PC-3 (cell line): ENCODE measurements at regions of chr7 and their contacts with region 1.

Region 1: GRCh38 chr7:148884299-148885022 is 370 bp upstream of the EZH2 start:
- DNase-seq: peak; percentile 92
- ATAC-seq: peak; percentile 91
- H3K4me3 ChIP-seq: peak overlapping the region; percentile 80
- H3K27ac ChIP-seq: peak overlapping the region; percentile 81
- H3K4me1 ChIP-seq: peaks cover 20% of the 10 kb centered on the region
- H3K27me3 ChIP-seq: no peaks in the 10 kb centered on the region
- CTCF ChIP-seq: no peak

Region 2: DNA sequence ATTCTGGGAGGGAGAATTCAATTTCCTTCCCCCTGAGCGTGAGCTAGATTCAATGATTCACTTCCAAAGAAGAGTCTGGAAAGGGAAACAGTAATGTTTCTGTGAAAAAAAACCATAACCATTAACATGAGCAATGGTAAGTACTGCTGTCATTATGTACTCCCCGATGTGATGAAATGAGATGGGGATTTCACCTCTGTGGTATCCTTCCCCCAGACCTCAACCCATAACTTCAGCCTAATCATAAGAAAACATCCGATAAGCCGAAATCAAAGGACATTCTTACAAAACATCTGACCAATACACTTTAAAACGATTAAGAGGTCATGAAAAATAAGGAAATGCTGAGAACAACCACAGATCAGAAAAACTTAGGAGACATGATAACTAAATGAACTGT is 27.6 kb before region 1 on chr7:
- CTCF ChIA-PET with region 1: no interaction called
- POLR2A ChIA-PET with region 1: no interaction called
- intact Hi-C with region 1: loop called (anchors 2 kb)
- DNase-seq: no peak
- ATAC-seq: peak; percentile 15
- H3K4me3 ChIP-seq: no peak overlapping the region
- H3K27ac ChIP-seq: no peak overlapping the region
- H3K4me1 ChIP-seq: no peaks in the 10 kb centered on the region
- H3K27me3 ChIP-seq: no peaks in the 10 kb centered on the region
- CTCF ChIP-seq: no peak

Region 3: DNA sequence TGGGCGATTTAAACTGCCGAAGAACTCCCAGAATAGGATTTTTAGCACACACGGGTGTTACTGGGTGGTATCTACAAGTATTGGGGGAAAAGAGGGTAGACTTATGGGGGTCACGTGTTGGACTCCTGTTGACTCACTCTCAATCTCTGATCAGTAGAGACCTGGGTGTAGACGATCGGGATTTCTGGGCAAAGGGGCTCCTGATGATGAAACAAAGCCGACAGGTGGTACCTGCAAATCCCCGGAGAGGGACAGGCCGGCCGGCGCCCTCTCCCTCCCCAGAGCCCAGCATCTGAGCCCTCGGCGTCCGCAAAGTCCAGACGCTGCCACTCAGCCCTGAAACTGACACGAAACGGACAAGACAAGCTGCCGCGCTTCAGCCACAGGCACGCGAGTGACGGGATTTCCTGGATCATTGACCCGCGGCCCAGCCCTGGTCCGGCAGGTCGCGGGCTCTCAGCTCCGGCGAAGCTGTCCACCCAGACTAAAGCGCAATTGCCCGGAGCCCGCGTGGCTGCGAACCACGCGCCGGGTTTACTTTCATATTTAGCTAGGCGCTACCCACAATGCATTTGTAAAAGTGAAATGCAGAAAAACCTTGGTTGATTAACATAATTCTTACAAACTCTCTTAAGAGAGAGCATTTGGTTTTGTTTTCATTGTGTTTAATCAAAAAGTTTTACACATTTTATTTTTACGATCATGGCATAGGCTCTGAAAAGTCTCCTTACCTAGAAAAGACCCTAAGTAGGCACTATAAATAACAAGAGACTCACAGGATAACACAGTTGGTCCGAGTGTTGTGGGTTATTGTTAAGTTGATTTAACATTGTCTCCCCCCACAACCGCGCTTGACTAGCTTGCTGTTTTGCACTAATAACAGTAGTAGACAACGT is 56.5 kb after region 1 on chr7:
- CTCF ChIA-PET with region 1: interaction called, 14 read pairs
- POLR2A ChIA-PET with region 1: interaction called, 4 read pairs
- intact Hi-C with region 1: loop called (anchors 1 kb)
- DNase-seq: peak; percentile 71
- ATAC-seq: peak; percentile 76
- H3K4me3 ChIP-seq: peak overlapping the region; percentile 76
- H3K27ac ChIP-seq: peak overlapping the region; percentile 73
- H3K4me1 ChIP-seq: peaks cover 12% of the 10 kb centered on the region
- H3K27me3 ChIP-seq: no peaks in the 10 kb centered on the region
- CTCF ChIP-seq: no peak

Region 4: DNA sequence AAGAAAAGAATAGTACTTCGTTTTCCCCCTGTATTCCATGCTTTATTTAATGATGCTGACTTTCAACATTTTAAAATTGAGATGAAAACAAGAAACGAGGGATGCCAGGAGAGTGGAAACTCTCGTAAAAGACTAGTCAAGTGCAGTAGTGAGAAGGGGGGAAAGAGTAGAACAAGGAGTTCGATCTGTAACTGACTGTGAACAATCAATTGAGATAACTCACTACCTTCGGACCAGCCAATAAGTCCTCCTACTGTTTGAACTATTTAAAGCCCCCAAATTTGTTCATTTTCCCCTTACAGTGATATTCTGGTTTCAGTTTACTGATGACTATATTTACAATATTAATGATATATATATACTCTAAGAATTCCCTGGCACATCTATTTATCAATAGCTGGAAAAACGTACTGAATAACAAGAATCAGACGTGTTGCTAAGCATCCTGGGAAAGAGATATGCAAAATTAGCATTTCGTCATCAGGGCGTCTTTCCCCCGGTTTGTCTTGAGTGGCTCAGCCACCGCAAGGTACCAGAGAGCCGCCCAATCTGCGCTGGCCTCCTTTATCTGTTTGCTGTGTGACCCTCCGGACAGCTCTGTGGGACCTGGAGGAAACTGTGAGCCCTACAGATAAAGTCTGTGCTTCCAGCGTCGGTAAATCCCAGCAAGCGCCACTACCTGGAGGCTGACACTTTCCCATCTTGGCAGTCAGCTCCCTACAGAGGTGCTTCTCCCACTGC is 102.7 kb after region 1 on chr7:
- CTCF ChIA-PET with region 1: no interaction called
- POLR2A ChIA-PET with region 1: no interaction called
- intact Hi-C with region 1: loop called (anchors 1 kb)
- DNase-seq: peak; percentile 89
- ATAC-seq: peak; percentile 85
- H3K4me3 ChIP-seq: peak overlapping the region; percentile 81
- H3K27ac ChIP-seq: peak overlapping the region; percentile 51
- H3K4me1 ChIP-seq: peaks cover 24% of the 10 kb centered on the region
- H3K27me3 ChIP-seq: no peaks in the 10 kb centered on the region
- CTCF ChIP-seq: no peak